ENCODE measurements at regions of chr20 and their contacts with region 1.

Region 1: DNA sequence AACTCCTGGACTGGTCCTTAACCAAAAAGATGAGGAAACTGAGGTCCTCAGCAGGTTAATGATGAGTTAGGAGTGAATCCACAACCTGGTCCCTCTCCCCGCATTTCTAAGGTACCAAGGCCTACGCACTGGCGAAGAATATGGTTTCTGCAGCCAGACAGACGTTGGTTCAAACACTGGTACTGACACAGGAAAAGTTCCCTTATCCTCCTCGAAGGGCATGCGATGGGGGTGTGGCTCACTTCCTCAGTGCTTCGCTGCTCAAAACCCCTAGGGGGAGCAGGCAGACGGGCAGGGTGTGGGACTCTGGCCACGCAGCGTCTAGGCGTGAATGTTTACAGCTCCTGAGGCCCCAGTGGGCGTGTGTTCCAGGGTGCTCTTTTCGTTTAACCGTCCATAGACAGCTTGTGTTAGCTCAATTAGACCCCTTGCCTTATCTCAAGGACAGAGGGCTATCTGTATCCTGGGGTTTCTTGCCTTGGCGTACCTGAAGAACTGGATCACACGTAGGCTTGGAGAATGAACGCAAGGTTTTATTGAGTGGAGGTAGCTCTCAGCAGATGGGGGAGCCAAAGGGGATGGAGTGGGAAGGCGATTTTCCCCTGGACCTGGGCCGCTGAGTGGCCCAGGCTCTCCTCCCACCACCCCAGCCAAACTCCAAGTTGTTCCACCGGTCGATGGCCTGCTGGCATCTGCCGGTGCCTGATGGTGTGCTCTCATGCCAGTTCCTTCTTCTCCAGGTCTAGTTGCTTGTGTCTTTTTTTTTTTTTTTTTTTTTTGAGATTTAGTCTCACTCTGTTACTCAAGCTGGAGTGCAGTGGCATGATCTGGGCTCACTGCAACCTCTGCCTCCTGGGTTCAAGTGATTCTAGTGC is 31.8 kb upstream of the PTPN1 start:
- DNase-seq: peak; percentile 89
- H3K4me3 Mint-ChIP-seq: no peak overlapping the region
- H3K27ac Mint-ChIP-seq: no peak overlapping the region
- H3K4me1 Mint-ChIP-seq: peaks cover 26% of the 10 kb centered on the region
- H3K27me3 Mint-ChIP-seq: no peaks in the 10 kb centered on the region

Region 2: DNA sequence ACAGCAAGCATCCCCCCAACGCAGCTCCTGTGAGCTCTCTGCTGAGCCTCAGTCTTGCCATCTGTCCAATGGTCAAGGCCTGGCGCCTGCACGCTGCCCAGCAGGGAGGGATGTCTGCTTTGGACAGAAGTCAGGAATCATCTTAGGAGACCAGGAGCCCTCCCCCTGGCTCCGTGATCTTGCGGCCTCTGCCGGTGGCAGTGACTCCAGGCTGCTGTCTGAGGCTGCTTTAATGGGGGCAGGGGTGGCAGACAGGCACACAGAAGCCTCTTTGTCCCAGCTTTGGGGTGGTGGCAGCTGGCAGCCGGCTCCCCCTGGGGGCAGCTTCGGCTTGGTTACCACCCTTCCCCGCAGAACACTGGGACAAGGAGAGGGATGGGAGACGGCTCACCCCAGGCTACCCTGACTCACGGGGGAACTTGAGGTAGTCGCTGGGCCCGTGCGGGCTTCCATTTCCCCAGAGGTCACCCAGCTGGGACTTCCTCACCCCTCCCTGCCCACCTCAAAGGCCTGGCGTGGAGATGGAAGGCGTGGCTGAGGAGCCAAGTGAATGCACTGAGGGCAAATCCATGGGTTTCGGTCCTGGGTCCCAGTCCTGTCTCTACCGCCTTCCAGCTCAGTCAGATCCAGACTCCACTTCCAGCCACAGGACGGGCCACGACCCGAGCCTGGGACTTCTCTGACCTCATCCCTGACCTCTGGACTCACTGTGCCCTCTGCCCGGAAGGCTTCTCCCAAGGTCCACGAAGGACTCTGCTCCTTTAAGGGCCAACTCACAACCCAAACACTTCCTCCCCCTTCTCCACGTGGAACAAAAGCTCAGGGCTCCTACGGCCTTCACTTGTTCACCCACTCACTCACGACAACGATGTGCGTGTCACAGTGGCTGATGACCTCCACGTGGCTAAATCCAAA is 339.7 kb before region 1 on chr20:
- CTCF ChIA-PET with region 1: no interaction called
- intact Hi-C with region 1: no loop called
- DNase-seq: no peak
- H3K4me3 Mint-ChIP-seq: no peak overlapping the region
- H3K27ac Mint-ChIP-seq: peak overlapping the region; percentile 21
- H3K4me1 Mint-ChIP-seq: peaks cover 36% of the 10 kb centered on the region
- H3K27me3 Mint-ChIP-seq: no peaks in the 10 kb centered on the region

Region 3: GRCh38 chr20:50569864-50570836 is 91.8 kb after region 1 on chr20:
- CTCF ChIA-PET with region 1: interaction called, 87 read pairs
- intact Hi-C with region 1: loop called (anchors 1 kb)
- DNase-seq: peak; percentile 83
- H3K4me3 Mint-ChIP-seq: peak overlapping the region; percentile 23
- H3K27ac Mint-ChIP-seq: peak overlapping the region; percentile 91
- H3K4me1 Mint-ChIP-seq: peaks cover 84% of the 10 kb centered on the region
- H3K27me3 Mint-ChIP-seq: no peaks in the 10 kb centered on the region